ENCODE measurements at regions of chr11 and their contacts with region 1.

Region 1: DNA sequence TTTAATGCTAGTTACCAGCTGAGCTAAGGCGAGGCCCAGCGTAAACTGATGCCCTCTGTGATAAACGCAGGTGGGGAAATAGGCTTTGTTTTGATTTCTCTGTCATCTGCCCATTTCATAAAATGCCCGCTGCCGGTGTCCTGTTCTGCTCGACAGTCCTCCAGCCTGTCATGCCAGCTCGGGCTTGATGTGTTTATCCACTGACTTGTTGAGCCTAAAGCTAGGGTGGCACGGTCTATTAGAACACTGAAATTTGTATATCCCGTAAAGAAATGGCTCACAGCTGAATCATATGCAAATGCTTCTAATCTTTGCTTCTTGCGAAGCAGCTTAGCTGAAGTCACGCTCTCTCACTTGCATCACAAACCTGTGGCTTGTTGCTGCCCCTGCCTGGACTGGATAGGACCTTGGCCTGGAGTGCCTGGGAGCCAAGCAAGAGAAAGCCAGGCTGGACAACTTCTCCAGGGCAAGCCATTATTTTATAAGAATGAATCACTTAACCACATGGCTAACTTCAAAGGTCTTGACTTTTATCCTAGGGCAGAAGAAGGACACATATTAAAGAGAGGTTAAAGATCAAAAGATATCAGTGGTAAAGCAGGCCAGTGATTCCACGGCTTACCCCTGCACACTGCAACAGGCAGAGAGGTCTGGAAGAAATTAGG is 33.1 kb downstream of the EHF start:
- DNase-seq: peak; percentile 46
- ATAC-seq: peak; percentile 39
- H3K4me3 Mint-ChIP-seq: no peak overlapping the region
- H3K27ac Mint-ChIP-seq: peak overlapping the region; percentile 13
- H3K4me1 Mint-ChIP-seq: peaks cover 55% of the 10 kb centered on the region
- H3K27me3 Mint-ChIP-seq: peaks cover 34% of the 10 kb centered on the region

Region 2: GRCh38 chr11:34234086-34234740 is 419.7 kb before region 1 on chr11:
- CTCF ChIA-PET with region 1: no interaction called
- POLR2A ChIA-PET with region 1: no interaction called
- intact Hi-C with region 1: loop called in 1 of 2 experiments (anchors 5 kb)
- DNase-seq: peak; percentile 89
- ATAC-seq: peak; percentile 93
- H3K4me3 Mint-ChIP-seq: peak overlapping the region; percentile 16
- H3K27ac Mint-ChIP-seq: peak overlapping the region; percentile 72
- H3K4me1 Mint-ChIP-seq: peaks cover 44% of the 10 kb centered on the region
- H3K27me3 Mint-ChIP-seq: peaks cover 3% of the 10 kb centered on the region

Region 3: DNA sequence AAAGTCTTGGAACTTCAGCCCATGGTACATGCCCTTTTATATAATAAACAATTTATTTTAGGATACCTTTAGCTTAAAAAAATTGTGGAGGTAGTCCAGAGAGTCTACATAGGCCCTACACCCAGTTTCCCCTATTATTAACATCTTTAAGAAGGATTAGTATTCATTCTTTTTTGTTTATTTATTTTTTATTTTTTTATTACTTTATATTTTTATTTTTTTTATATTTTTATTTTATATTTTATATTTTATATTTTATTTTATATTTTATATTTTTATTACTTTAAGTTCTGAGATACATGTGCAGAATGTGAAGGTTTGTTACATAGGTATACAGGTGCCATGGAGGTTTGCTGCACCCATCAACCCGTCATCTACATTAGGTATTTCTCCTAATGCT is 280.2 kb before region 1 on chr11:
- CTCF ChIA-PET with region 1: no interaction called
- POLR2A ChIA-PET with region 1: no interaction called
- intact Hi-C with region 1: loop called in 1 of 2 experiments (anchors 5 kb)
- DNase-seq: no peak
- ATAC-seq: no peak
- H3K4me3 Mint-ChIP-seq: no peak overlapping the region
- H3K27ac Mint-ChIP-seq: no peak overlapping the region
- H3K4me1 Mint-ChIP-seq: peaks cover 15% of the 10 kb centered on the region
- H3K27me3 Mint-ChIP-seq: peaks cover 8% of the 10 kb centered on the region

Region 4: GRCh38 chr11:34468209-34468841 is 185.6 kb before region 1 on chr11:
- CTCF ChIA-PET with region 1: no interaction called
- POLR2A ChIA-PET with region 1: no interaction called
- intact Hi-C with region 1: no loop called
- DNase-seq: peak; percentile 68
- ATAC-seq: peak; percentile 66
- H3K4me3 Mint-ChIP-seq: no peak overlapping the region
- H3K27ac Mint-ChIP-seq: no peak overlapping the region
- H3K4me1 Mint-ChIP-seq: peaks cover 4% of the 10 kb centered on the region
- H3K27me3 Mint-ChIP-seq: no peaks in the 10 kb centered on the region

Region 5: DNA sequence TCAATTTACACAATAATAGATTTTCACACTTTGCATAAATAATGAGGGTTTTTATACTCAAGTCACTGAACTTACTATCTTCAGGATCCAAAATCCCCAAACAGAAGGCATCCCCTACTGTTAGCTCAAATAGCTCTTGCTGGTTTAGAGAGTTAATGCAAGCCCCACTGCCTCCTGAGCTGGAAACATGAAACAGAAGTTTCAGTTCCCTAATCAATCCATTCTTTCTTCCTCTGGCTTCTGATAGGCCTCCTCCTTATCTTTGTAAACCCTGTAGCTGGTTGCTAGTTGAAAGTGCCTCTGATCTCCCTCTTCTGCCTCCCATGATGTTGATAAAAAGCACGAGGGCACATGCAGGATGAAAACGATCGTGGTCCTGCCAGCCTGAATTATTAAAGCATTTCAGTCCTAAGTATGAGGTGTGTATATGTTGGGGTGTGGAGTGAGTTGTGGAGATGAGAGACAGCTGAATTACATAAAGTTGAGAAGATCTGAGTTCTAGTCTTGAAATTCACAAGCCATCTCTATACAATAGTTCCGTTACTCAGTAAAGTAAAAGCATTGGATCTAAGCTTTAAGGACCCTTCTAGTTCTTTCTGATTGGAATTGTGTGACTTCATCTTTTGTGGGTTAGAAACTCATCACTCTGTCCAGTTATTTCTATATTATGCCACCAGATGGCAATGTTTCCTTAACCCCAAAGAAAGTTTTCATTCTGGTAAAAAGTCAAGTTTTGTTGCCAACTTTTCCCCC is 68.0 kb before region 1 on chr11:
- CTCF ChIA-PET with region 1: no interaction called
- POLR2A ChIA-PET with region 1: no interaction called
- intact Hi-C with region 1: loop called in 1 of 2 experiments (anchors 5 kb)
- DNase-seq: no peak
- ATAC-seq: no peak
- H3K4me3 Mint-ChIP-seq: no peak overlapping the region
- H3K27ac Mint-ChIP-seq: no peak overlapping the region
- H3K4me1 Mint-ChIP-seq: peaks cover 4% of the 10 kb centered on the region
- H3K27me3 Mint-ChIP-seq: peaks cover 30% of the 10 kb centered on the region

Region 6: DNA sequence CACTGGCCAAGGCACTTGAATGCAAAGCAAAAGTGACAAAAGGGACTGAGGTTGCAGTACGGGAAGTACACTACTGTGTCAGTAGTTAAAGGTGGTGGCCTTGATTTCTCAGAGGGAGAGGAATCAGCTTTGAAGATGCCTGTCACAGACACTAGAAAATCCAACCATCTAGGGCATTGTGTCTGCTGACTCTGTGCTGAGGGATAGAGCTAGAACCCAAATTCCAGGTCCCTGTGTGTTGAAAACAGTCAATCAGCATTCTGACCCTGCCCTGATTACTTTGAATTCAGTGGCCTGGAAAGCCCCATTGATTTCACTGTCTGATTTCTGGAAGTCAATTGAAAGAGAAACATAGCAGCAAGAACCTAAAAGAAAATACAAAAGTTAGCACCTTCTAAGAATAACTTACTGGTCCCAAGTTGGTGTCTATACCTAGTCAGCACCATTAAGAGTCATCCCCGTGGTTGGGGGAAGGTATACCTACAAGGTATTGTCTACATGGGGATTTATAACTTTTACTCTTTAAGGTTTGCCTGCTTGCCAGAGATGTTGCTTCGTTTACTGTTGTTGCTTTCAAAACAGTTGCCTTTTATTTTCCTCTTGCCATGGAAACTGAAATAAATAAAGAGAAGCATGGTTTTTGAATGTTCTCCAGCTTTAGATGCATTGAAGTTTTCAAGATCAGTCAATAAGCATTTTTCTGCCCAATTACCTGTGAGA is 359.7 kb after region 1 on chr11:
- CTCF ChIA-PET with region 1: no interaction called
- POLR2A ChIA-PET with region 1: no interaction called
- intact Hi-C with region 1: loop called in 1 of 2 experiments (anchors 1 kb)
- DNase-seq: peak; percentile 54
- ATAC-seq: peak; percentile 75
- H3K4me3 Mint-ChIP-seq: peak overlapping the region; percentile 34
- H3K27ac Mint-ChIP-seq: peak overlapping the region; percentile 74
- H3K4me1 Mint-ChIP-seq: peaks cover 49% of the 10 kb centered on the region
- H3K27me3 Mint-ChIP-seq: peaks cover 2% of the 10 kb centered on the region

Region 7: GRCh38 chr11:35087648-35088047 is 433.7 kb after region 1 on chr11:
- CTCF ChIA-PET with region 1: no interaction called
- POLR2A ChIA-PET with region 1: no interaction called
- intact Hi-C with region 1: no loop called
- DNase-seq: peak; percentile 30
- ATAC-seq: no peak
- H3K4me3 Mint-ChIP-seq: no peak overlapping the region
- H3K27ac Mint-ChIP-seq: peak overlapping the region; percentile 28
- H3K4me1 Mint-ChIP-seq: peaks cover 84% of the 10 kb centered on the region
- H3K27me3 Mint-ChIP-seq: no peaks in the 10 kb centered on the region

Region 8: DNA sequence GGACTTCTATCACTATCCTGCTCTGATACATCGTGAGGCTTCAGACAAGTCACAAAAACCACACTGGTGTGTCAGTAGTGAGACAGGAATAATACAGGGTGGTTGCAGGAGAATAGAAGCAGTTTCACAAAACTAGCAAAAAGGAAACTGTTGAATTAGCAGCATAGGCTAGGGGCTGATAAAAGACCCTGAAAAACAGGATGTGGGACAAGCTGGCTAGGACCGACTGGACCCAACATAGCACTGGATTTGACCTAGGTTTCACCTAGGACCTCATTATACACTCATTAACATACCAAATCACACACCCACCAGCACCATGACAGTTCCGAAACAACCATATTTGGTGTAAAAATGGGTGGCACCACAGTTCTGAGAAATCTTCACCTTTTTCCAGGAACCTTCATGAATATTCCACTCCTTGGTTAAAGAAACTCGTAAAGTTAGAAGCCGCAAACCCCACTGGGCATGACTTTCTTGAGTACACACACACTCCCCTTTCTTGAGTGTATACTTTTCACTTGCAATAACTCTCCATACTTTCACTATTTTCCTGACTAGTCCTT is 689.2 kb after region 1 on chr11:
- CTCF ChIA-PET with region 1: no interaction called
- POLR2A ChIA-PET with region 1: no interaction called
- intact Hi-C with region 1: loop called in 1 of 2 experiments (anchors 5 kb)
- DNase-seq: peak; percentile 50
- ATAC-seq: peak; percentile 86
- H3K4me3 Mint-ChIP-seq: no peak overlapping the region
- H3K27ac Mint-ChIP-seq: peak overlapping the region; percentile 23
- H3K4me1 Mint-ChIP-seq: peaks cover 31% of the 10 kb centered on the region
- H3K27me3 Mint-ChIP-seq: no peaks in the 10 kb centered on the region